Activated CD4-positive, alpha-beta T cell treated with anti-CD3 and anti-CD28 coated beads, Interleukin-2, amount 10 ng/mL, durations not matched to agents 7 days and 5 days (primary cell): ENCODE measurements at regions of chr3 and their contacts with region 1.

Region 1: GRCh38 chr3:45656575-45657363 is 32.4 kb upstream of the SACM1L start:
- DNase-seq: peak; percentile 91
- H3K4me3 Mint-ChIP-seq: no peak overlapping the region
- H3K27ac Mint-ChIP-seq: no peak overlapping the region
- H3K4me1 Mint-ChIP-seq: peaks cover 18% of the 10 kb centered on the region
- H3K27me3 Mint-ChIP-seq: no peaks in the 10 kb centered on the region

Region 2: DNA sequence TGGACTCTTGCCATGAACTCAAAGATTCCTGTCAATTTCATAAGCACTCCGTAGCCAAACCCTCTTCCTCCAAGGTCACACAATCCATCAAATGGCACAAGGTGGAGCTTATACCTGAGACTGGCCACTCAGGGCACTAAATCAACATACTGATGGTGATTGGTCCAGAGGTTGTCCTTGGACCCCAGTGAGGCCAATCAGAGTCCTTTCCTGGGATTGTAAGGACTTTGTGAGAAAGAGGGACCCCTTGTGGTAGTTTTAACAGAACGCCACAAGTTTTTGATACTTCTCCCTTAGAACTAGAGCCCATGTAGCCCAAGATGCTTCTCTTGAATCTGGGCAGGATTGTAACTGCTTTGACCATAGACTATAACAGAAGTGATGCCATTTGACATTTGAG is 312.8 kb before region 1 on chr3:
- CTCF ChIA-PET with region 1: no interaction called
- POLR2A ChIA-PET with region 1: no interaction called
- DNase-seq: no peak
- H3K4me3 Mint-ChIP-seq: no peak overlapping the region
- H3K27ac Mint-ChIP-seq: no peak overlapping the region
- H3K4me1 Mint-ChIP-seq: no peaks in the 10 kb centered on the region
- H3K27me3 Mint-ChIP-seq: peaks cover 5% of the 10 kb centered on the region

Region 3: DNA sequence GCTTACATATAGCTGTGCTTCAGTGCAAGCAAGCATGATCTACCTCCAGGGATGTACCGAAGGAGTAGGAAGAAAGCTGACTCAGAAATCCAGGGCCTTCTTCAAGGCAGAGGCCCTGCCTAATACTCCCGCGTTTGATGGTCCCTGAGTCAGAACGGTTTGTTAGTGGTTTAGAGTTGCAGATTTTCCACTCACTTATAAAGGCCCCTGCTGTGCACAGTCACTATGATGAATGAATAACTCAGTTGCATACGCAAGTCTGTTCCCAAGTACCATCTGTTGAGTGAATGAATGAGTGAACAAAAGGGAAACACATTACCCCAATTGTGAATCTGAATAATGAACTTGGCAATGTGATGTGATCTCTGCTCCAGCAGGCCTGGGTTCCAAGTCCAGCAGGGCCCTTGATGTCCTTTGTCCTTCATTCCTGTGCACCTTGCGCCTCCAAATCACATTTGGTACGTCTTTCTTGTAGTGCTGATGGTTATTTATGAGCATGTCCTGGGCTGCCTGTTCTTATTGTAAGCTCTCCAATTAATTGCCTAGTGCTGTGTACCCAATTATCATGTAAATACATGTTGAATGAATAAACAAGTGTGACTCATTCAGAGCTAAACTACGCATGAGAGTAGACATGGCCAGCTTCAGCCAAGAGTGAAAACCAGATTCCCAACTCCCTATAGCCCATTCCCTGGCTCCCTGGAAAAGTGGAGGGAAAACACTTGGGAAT is 147.6 kb before region 1 on chr3:
- CTCF ChIA-PET with region 1: interaction called, 13 read pairs
- POLR2A ChIA-PET with region 1: no interaction called
- DNase-seq: no peak
- H3K4me3 Mint-ChIP-seq: no peak overlapping the region
- H3K27ac Mint-ChIP-seq: no peak overlapping the region
- H3K4me1 Mint-ChIP-seq: peaks cover 2% of the 10 kb centered on the region
- H3K27me3 Mint-ChIP-seq: no peaks in the 10 kb centered on the region

Region 4: DNA sequence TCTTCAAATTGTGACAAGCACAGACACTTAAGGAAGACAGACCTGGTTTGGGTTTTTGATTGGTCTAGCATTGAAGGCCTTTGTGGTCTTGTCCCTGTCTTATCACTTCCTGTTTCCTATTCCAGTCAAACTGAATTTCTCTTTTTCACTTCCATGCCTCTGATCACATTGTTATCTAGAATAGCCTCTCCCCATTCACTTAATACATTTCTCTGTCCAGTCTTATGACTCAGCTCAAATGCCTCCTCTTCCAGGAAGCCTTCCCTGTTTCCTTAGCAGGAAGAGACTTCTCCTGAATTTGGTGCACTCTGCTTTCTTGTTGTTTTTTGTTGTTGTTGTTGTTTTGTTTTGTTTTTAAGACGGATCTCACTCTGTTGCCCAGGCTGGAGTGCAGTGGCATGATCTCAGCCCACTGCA is 16.7 kb before region 1 on chr3:
- CTCF ChIA-PET with region 1: interaction called, 14 read pairs
- POLR2A ChIA-PET with region 1: no interaction called
- DNase-seq: no peak
- H3K4me3 Mint-ChIP-seq: no peak overlapping the region
- H3K27ac Mint-ChIP-seq: no peak overlapping the region
- H3K4me1 Mint-ChIP-seq: peaks cover 11% of the 10 kb centered on the region
- H3K27me3 Mint-ChIP-seq: no peaks in the 10 kb centered on the region